T-cell (primary cell): ENCODE measurements at regions of chr5 and their contacts with region 1.

Region 1: GRCh38 chr5:67190856-67191255 is 5.7 kb downstream of the CD180 start:
- DNase-seq: no peak
- ATAC-seq: no peak
- H3K4me3 ChIP-seq: no peak overlapping the region
- H3K4me3 Mint-ChIP-seq: no peak overlapping the region
- H3K27ac ChIP-seq: no peak overlapping the region
- H3K27ac Mint-ChIP-seq: peak overlapping the region in 1 of 2 donors; percentile 7
- H3K4me1 ChIP-seq: peaks cover 13 to 17% of the 10 kb centered on the region in 2 experiments
- H3K4me1 Mint-ChIP-seq: peaks cover 36 to 71% (median 66%) of the 10 kb centered on the region in 3 donors
- H3K27me3 ChIP-seq: no peaks in the 10 kb centered on the region
- H3K27me3 Mint-ChIP-seq: no peaks in the 10 kb centered on the region

Region 2: GRCh38 chr5:67095346-67096171 is 95.3 kb before region 1 on chr5:
- CTCF ChIA-PET with region 1: no interaction called
- POLR2A ChIA-PET with region 1: no interaction called
- DNase-seq: no peak
- ATAC-seq: no peak
- H3K4me3 ChIP-seq: no peak overlapping the region
- H3K4me3 Mint-ChIP-seq: no peak overlapping the region
- H3K27ac ChIP-seq: no peak overlapping the region
- H3K27ac Mint-ChIP-seq: no peak overlapping the region
- H3K4me1 ChIP-seq: no peaks in the 10 kb centered on the region
- H3K4me1 Mint-ChIP-seq: peaks cover 0 to 10% (median 6%) of the 10 kb centered on the region in 3 donors
- H3K27me3 ChIP-seq: no peaks in the 10 kb centered on the region
- H3K27me3 Mint-ChIP-seq: no peaks in the 10 kb centered on the region

Region 3: DNA sequence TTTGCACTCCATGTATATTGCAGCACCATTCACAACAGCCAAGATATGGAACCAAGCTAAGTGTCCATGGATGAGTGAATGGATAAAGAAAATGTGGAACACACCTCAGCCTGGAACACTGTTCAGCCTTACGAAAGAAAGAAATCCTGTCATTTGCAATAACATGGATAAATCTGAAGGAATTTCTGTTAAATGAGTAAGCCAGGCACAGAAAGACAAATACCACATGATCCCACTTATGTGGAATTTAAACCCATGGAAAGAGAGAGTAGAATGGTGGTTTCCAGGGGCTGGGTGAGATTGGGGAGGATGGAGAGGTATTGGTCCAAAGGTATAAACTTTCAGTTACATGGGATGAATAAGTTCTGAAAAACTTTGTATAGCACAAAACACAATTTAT is 234.7 kb after region 1 on chr5:
- CTCF ChIA-PET with region 1: no interaction called
- POLR2A ChIA-PET with region 1: no interaction called
- DNase-seq: no peak
- ATAC-seq: no peak
- H3K4me3 ChIP-seq: no peak overlapping the region
- H3K4me3 Mint-ChIP-seq: no peak overlapping the region
- H3K27ac ChIP-seq: no peak overlapping the region
- H3K27ac Mint-ChIP-seq: no peak overlapping the region
- H3K4me1 ChIP-seq: no peaks in the 10 kb centered on the region
- H3K4me1 Mint-ChIP-seq: no peaks in the 10 kb centered on the region
- H3K27me3 ChIP-seq: no peaks in the 10 kb centered on the region
- H3K27me3 Mint-ChIP-seq: no peaks in the 10 kb centered on the region

Region 4: GRCh38 chr5:68476854-68477253 is 1286.0 kb after region 1 on chr5:
- CTCF ChIA-PET with region 1: interaction called in 1 of 2 experiments, 18 read pairs
- POLR2A ChIA-PET with region 1: no interaction called
- DNase-seq: no peak
- ATAC-seq: no peak
- H3K4me3 ChIP-seq: no peak overlapping the region
- H3K4me3 Mint-ChIP-seq: no peak overlapping the region
- H3K27ac ChIP-seq: no peak overlapping the region
- H3K27ac Mint-ChIP-seq: no peak overlapping the region
- H3K4me1 ChIP-seq: no peaks in the 10 kb centered on the region
- H3K4me1 Mint-ChIP-seq: no peaks in the 10 kb centered on the region
- H3K27me3 ChIP-seq: no peaks in the 10 kb centered on the region
- H3K27me3 Mint-ChIP-seq: peaks cover 0 to 5% of the 10 kb centered on the region in 2 donors